Activated CD4-positive, alpha-beta T cell treated with anti-CD3 and anti-CD28 coated beads, Interleukin-2, amount 10 ng/mL, durations not matched to agents 24 days and 14 days (primary cell): ENCODE measurements at regions of chr7 and their contacts with region 1.

Region 1: GRCh38 chr7:26864309-26865093 is at the start of gene SKAP2:
- DNase-seq: peak; percentile 96
- H3K4me3 Mint-ChIP-seq: peak within 1 kb of the TSS; percentile 93
- H3K27ac Mint-ChIP-seq: peak within 1 kb of the TSS; percentile 73
- H3K4me1 Mint-ChIP-seq: peaks cover 16% of the 10 kb centered on the region
- H3K27me3 Mint-ChIP-seq: peaks cover 39% of the 10 kb centered on the region
- total RNA-seq, gene SKAP2: 3.6 and 4.6 TPM in 2 replicates

Region 2: DNA sequence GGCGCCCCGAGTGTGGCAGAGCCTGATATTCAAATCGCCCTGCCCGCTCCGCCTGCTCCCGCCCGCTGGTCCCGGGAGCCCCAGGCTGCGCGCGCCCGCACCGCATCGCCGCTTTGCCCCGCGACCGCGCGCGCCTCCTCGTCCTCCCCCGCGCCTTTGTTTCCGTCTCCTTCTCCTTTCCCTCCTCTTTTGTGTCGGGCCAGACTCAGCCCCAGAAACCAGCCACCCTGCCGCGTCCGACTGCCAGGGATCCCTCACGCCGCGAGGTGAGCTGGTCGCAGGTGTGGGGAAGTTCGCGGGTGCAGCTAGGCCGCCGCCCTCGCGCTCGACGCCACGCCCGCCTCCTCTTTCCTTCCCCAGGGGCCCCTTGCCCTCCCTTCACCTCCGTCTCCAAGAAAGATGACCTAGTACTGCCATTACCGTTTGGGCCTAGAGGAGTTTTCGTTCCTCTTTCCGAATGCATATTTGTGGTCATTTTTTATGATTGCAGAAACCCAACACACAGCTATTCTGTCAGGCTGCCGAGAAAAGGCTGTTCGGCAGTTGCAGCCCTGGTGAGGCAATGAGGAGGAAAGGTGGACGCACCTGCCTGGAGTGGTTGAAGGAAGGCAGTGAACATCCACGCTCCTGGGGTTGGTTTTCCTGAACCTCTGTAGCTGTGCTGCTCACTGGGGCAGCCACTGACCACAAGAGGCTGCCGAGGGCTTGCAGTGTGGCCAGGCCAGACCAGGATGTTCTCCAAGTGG is 465.6 kb before region 1 on chr7:
- intact Hi-C with region 1: loop called (anchors 10 kb)
- DNase-seq: peak; percentile 75
- H3K4me3 Mint-ChIP-seq: peak overlapping the region; percentile 92
- H3K27ac Mint-ChIP-seq: peak overlapping the region; percentile 92
- H3K4me1 Mint-ChIP-seq: peaks cover 10% of the 10 kb centered on the region
- H3K27me3 Mint-ChIP-seq: peaks cover 47% of the 10 kb centered on the region